GM10248 (cell line): ENCODE measurements at regions of chr10 and their contacts with region 1.

Region 1: DNA sequence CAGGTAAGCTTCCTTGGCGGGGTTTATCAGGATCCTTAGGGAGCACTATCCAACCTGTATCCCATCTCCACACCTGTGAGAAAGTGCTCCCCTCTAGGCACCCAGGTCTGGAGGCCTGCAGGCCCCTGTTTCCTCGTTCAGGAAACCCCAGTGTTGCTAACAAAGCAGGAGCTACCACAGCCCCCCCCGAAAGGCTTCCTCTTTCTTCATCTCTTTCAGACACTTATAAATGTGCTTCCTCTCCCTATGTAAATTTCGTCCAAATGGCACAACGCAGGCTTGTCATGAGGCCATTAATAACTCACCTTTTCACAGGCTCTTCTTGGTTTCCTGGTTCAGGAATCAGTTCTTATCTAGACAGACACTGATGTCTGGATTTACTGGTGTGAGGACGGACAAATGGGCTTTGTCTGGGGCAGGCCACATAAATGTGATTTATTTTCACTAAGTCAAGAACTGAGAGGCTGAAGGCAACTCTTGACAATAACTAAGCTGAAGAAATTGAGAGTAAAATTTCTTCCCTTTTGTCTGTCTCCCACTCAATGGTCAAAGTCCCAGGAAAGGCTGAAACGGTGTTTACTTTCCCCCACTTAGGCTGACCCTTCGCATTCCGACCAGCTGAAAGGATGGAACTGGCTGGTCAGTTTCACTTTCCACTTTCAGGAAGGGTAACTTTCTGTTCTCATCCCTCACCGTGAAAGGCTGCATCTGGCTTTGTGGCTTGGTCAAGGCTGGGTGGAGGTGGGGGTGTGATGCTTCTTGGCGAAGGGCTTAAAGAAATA is 46.8 kb downstream of the PIK3AP1 start:
- DNase-seq: peak; percentile 46
- CTCF ChIP-seq: no peak

Region 2: DNA sequence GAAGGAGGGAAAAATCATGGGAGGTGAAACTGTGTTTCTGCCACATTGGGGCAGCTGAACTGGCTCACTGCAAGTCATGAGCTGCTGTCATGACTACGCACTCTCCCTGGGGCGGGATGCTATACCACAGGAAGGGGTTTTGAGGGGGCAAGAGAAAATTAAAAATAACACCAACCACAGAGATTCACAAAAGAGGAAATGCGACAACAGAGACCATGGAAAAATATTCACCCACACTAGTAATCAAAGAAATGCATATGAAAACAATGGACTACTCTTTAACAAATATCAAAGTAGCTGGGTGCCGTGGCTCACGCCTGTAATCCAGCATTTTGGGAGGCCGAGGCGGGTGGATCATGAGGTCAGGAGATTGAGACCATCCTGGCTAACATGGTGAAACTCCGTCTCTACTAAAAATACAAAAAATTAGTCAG is 21.5 kb before region 1 on chr10:
- CTCF ChIA-PET with region 1: interaction called, 13 read pairs
- POLR2A ChIA-PET with region 1: no interaction called
- DNase-seq: peak; percentile 63
- CTCF ChIP-seq: no peak

Region 3: DNA sequence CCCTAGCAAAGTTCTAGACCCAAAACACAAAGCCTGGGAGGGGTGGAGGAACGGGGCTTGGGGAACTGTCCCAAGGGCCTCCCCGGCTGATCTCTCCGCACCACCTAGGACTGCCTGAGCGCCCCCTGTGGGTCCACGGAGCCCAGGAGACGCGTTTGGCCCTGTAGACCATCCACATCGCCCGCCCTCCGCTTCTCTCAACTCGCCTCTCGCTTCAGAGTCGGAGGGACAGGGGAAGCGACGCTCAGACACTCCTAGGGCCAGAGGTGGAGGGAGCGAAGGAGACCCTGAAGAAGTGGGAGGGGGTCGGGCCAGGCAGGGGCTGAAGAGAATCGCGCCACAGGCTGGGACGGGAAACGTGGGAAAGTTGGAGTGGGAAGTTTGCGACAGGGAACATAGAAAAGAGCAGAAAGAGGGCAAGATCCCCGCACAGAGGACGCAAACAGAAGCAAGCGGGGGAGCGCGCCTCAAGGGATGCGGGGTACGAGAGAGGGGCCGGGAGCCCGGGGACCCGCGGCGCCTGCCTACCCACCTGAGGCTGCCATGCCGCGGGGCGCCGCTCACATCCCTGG is 46.4 kb after region 1 on chr10:
- CTCF ChIA-PET with region 1: interaction called, 17 read pairs
- POLR2A ChIA-PET with region 1: interaction called, 9 read pairs
- DNase-seq: peak; percentile 80
- CTCF ChIP-seq: peak; percentile 96

Region 4: GRCh38 chr10:96890172-96890513 is 216.6 kb after region 1 on chr10:
- CTCF ChIA-PET with region 1: no interaction called
- POLR2A ChIA-PET with region 1: no interaction called
- DNase-seq: no peak
- CTCF ChIP-seq: no peak